Adrenal gland (tissue), 19 donors: ENCODE measurements at regions of chr5 and their contacts with region 1.

Region 1: GRCh38 chr5:154811653-154812365 is 38.6 kb downstream of the FAXDC2 start:
- DNase-seq: peak; percentile 63 to 90 (median 78)
- H3K4me3 ChIP-seq: no peak overlapping the region
- H3K27ac ChIP-seq: peak overlapping the region in 1 of 5 donors; percentile 44
- H3K4me1 ChIP-seq: peaks cover 0 to 12% of the 10 kb centered on the region in 2 donors
- H3K27me3 ChIP-seq: no peaks in the 10 kb centered on the region
- CTCF ChIP-seq: peak; percentile 92 to 97 (median 94)
- POLR2A ChIP-seq: no peak

Region 2: DNA sequence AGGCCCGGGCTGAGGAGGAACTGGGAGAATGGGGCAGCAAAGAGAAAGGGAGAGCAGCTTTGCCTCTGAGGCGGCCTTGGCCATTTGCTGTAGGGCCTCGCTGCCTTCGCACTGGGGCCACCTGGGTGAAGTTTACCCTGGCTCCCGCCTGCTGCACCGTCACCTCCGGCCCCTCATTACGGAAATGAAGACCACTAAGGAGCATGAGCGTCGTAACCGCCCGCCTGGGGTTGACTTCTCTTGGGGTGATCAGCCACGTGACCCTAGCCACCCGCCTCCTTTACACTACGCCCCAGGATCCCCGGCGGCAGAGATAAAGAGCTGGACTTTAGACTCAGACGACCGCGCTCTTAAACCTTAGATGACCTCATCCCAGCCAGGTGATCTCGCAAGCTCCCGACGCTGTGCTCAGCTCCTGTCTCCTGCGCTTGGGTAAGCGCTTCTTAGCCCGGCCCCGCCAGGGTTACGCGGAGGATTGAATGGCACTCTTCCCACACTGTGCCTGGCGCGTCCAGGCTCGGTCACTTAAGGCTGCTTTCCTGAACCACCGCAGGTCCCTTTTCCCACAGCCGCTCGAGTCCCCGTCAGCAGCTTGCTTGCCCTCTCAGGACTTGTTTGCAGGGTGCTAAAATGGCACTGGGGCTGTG is 164.6 kb before region 1 on chr5:
- intact Hi-C with region 1: loop called (anchors 2 to 5 kb)
- DNase-seq: peak in 4 of 7 donors; percentile 19 to 73 (median 34)
- H3K4me3 ChIP-seq: peak overlapping the region in 1 of 4 donors; percentile 46
- H3K27ac ChIP-seq: no peak overlapping the region
- H3K4me1 ChIP-seq: peaks cover 0 to 4% of the 10 kb centered on the region in 2 donors
- H3K27me3 ChIP-seq: no peaks in the 10 kb centered on the region
- CTCF ChIP-seq: no peak
- POLR2A ChIP-seq: no peak

Region 3: DNA sequence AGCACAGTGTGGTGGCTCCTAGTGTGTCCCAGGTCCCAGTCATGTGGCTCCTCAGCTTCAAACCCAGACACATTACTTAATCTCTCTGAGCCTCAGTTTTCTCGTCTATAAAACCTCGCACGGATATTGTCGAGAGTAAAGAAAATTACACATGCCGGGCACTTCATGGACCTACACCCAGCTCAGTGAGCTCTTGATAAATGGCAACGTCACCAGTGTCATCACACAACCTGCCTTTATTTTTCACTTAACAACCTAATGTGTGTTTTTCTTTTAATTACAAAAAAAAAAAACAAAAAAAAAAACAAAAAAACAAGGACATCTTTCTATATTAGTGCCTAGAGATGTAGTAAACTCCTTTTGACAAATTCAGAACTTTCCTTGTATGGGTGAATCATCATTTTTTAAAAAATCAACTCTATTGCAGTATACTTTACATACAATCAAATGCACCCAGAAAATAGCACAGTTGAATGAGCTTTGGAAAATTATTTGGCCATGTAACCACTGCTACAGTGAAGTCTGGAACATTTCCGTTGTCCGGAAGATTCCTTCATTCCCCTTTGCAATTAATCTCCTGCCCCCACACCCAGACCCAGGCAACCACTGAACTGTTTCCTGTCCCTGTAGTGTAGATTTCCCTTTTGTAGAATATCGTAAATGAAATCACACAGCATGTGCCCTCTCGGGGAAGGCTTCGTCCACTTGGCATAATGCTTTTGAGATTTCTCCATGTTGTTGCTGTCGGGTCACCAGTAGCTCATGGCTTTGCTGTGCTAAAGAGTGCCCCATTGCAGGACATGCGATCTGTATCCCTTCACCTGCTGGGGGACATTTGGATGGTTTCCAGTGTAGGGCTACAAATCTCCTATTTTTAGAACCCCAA is 157.1 kb before region 1 on chr5:
- intact Hi-C with region 1: loop called (anchors 2 to 5 kb)
- DNase-seq: no peak
- H3K4me3 ChIP-seq: peak overlapping the region in 1 of 4 donors; percentile 13
- H3K27ac ChIP-seq: peak overlapping the region in 4 of 5 donors; percentile 14 to 71 (median 61)
- H3K4me1 ChIP-seq: peaks cover 9 to 27% of the 10 kb centered on the region in 2 donors
- H3K27me3 ChIP-seq: no peaks in the 10 kb centered on the region
- CTCF ChIP-seq: no peak
- POLR2A ChIP-seq: no peak